ENCODE measurements at regions of chr14 and their contacts with region 1.

Region 1: GRCh38 chr14:99755629-99756603 is 37.3 kb upstream of the EML1 start:
- DNase-seq: no peak
- H3K4me3 Mint-ChIP-seq: no peak overlapping the region
- H3K27ac Mint-ChIP-seq: no peak overlapping the region
- H3K4me1 Mint-ChIP-seq: peaks cover 24% of the 10 kb centered on the region
- H3K27me3 Mint-ChIP-seq: peaks cover 46% of the 10 kb centered on the region

Region 2: GRCh38 chr14:99774556-99775307 is 18.8 kb after region 1 on chr14:
- CTCF ChIA-PET with region 1: no interaction called
- POLR2A ChIA-PET with region 1: no interaction called
- intact Hi-C with region 1: loop called (anchors 2 kb)
- DNase-seq: no peak
- H3K4me3 Mint-ChIP-seq: no peak overlapping the region
- H3K27ac Mint-ChIP-seq: no peak overlapping the region
- H3K4me1 Mint-ChIP-seq: peaks cover 10% of the 10 kb centered on the region
- H3K27me3 Mint-ChIP-seq: peaks cover 24% of the 10 kb centered on the region

Region 3: GRCh38 chr14:99786511-99786989 is 30.6 kb after region 1 on chr14:
- CTCF ChIA-PET with region 1: no interaction called
- POLR2A ChIA-PET with region 1: no interaction called
- intact Hi-C with region 1: no loop called
- DNase-seq: no peak
- H3K4me3 Mint-ChIP-seq: no peak overlapping the region
- H3K27ac Mint-ChIP-seq: no peak overlapping the region
- H3K4me1 Mint-ChIP-seq: peaks cover 8% of the 10 kb centered on the region
- H3K27me3 Mint-ChIP-seq: peaks cover 2% of the 10 kb centered on the region